B cell (primary cell): ENCODE measurements at regions of chrX and their contacts with region 1.

Region 1: GRCh38 chrX:150365051-150365989 is 2.2 kb downstream of the MAMLD1 start:
- DNase-seq: peak; percentile 58
- ATAC-seq: peak; percentile 12
- H3K4me3 ChIP-seq: peak overlapping the region; percentile 39 to 62 (median 59)
- H3K4me3 Mint-ChIP-seq: peak overlapping the region; percentile 86
- H3K27ac ChIP-seq: no peak overlapping the region
- H3K27ac Mint-ChIP-seq: peak overlapping the region; percentile 20
- H3K4me1 ChIP-seq: peaks cover 17 to 43% of the 10 kb centered on the region in 2 donors
- H3K4me1 Mint-ChIP-seq: peaks cover 31% of the 10 kb centered on the region
- H3K27me3 ChIP-seq: peaks cover 0 to 9% (median 5%) of the 10 kb centered on the region in 4 experiments
- H3K27me3 Mint-ChIP-seq: peaks cover 10% of the 10 kb centered on the region
- CTCF ChIP-seq: peak; percentile 41

Region 2: DNA sequence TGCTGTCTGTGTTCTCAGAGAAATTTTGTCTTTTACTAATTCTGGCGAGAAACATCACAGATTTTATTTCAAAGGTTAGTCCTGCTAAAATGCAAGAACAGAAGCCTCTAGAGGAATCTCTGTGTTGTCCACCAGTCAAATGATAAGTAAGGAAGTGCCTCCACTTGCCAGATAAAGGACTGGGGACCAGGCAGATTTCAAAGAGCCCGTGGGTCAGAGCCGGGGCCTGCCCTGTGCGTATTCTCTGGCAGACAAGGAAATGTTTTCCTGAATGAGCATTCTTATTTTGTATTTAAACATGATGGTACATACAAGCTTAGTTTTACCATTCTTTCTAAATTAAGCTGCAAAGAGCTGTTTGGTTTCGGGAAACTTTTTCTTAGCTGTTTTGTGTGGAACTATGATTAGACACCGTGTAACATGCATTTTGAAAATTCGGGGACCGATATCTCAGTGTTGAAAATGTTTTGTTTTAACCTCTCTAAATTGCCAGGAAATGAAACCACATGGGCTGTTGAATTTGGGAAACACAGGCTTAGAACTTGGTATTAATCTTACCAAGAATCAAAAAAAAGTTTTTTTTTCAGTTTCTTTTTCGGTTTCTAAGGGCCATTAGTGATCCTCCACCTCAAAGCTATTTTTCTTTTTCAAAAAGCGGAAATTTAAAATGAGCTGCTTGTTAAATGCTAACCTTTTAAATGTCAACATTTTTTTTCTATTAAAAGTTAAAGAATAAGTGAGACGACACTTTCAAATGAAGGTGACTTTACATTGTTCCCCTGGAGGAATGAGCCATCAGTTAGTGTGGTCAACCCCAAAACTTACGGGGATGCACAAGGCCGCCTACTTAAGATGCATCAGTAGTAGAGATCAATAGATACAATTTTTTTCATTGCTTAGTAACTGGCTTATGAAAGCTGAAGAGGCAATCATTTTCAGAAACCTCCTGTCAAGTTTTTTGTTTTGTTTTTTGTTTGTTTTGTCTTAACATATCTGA is 113.5 kb after region 1 on chrX:
- CTCF ChIA-PET with region 1: interaction called, 3 read pairs
- POLR2A ChIA-PET with region 1: no interaction called
- intact Hi-C with region 1: loop called (anchors 5 kb)
- DNase-seq: peak; percentile 26
- ATAC-seq: peak; percentile 28
- H3K4me3 ChIP-seq: peak overlapping the region in 4 of 5 experiments; percentile 1 to 33 (median 11)
- H3K4me3 Mint-ChIP-seq: peak overlapping the region; percentile 86
- H3K27ac ChIP-seq: peak overlapping the region; percentile 5 to 44
- H3K27ac Mint-ChIP-seq: peak overlapping the region; percentile 87
- H3K4me1 ChIP-seq: peaks cover 28 to 36% of the 10 kb centered on the region in 2 donors
- H3K4me1 Mint-ChIP-seq: peaks cover 39% of the 10 kb centered on the region
- H3K27me3 ChIP-seq: no peaks in the 10 kb centered on the region
- H3K27me3 Mint-ChIP-seq: no peaks in the 10 kb centered on the region
- CTCF ChIP-seq: no peak

Region 3: GRCh38 chrX:150575416-150575808 is 210.1 kb after region 1 on chrX:
- CTCF ChIA-PET with region 1: no interaction called
- POLR2A ChIA-PET with region 1: no interaction called
- intact Hi-C with region 1: loop called (anchors 5 kb)
- DNase-seq: no peak
- ATAC-seq: no peak
- H3K4me3 ChIP-seq: peak overlapping the region in 2 of 5 experiments; percentile 12 to 22
- H3K4me3 Mint-ChIP-seq: peak overlapping the region; percentile 74
- H3K27ac ChIP-seq: peak overlapping the region in 1 of 2 donors; percentile 12
- H3K27ac Mint-ChIP-seq: peak overlapping the region; percentile 82
- H3K4me1 ChIP-seq: peaks cover 59 to 68% of the 10 kb centered on the region in 2 donors
- H3K4me1 Mint-ChIP-seq: peaks cover 80% of the 10 kb centered on the region
- H3K27me3 ChIP-seq: no peaks in the 10 kb centered on the region
- H3K27me3 Mint-ChIP-seq: no peaks in the 10 kb centered on the region
- CTCF ChIP-seq: no peak

Region 4: DNA sequence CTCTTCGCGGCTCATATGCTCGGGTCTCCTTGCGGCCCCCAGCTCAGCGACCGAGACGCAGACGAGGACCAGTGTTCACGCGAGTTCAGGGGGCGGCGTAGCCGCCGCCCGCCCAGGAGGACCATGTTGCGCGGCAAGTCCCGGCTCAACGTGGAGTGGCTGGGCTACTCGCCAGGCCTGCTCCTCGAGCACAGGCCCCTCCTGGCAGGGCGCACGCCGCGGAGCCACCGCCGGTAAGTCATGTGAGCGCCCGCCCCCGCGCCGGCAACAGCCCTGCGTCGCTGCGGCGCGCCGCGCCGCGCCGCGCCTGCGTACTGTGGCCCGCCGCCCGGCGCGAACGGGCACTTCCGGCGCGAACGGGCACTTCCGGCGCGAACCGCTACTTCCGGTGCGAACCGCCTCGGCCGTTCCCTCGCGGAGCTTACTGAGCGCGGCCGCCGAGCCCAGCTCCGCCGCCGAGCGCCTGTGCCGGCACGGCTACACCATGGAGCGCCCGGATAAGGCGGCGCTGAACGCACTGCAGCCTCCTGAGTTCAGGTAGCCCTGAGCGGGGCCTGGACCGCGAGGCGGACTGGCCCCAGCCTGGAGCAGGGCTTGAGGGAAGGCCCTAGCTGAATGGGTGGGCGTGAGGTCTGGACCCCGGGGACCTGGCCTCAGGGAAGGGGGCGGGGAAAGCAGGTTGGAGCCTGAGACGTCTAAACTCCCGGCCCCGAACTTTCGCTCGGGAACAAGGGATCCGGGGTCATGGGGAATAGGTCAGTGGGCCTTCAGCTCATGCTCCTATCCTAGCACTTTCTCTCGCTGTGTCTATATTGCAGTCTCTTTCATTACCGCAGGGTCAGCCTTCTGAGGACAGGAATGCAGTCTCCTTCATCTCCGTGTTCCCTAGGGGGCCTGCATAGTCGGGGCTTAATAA is 1031.8 kb after region 1 on chrX and contains the start of gene VMA21:
- CTCF ChIA-PET with region 1: no interaction called
- POLR2A ChIA-PET with region 1: no interaction called
- intact Hi-C with region 1: loop called (anchors 10 kb)
- DNase-seq: peak; percentile 90
- ATAC-seq: peak; percentile 89
- H3K4me3 ChIP-seq: peak within 1 kb of the TSS; percentile 48 to 82 (median 77)
- H3K4me3 Mint-ChIP-seq: peak within 1 kb of the TSS; percentile 90
- H3K27ac ChIP-seq: peak within 1 kb of the TSS; percentile 96 to 98
- H3K27ac Mint-ChIP-seq: peak within 1 kb of the TSS; percentile 96
- H3K4me1 ChIP-seq: peaks cover 5 to 22% of the 10 kb centered on the region in 2 donors
- H3K4me1 Mint-ChIP-seq: peaks cover 52% of the 10 kb centered on the region
- H3K27me3 ChIP-seq: no peaks in the 10 kb centered on the region
- H3K27me3 Mint-ChIP-seq: no peaks in the 10 kb centered on the region
- CTCF ChIP-seq: no peak
- total RNA-seq, gene VMA21: 22.6 and 22.7 TPM in 2 replicates